Activated B cell treated with CpG ODN at 0.5 μM for 24 hours (primary cell): ENCODE measurements at regions of chr7 and their contacts with region 1.

Region 1: GRCh38 chr7:7424151-7424873 is 111.4 kb downstream of the COL28A1 start:
- DNase-seq: no peak
- ATAC-seq: peak; percentile 75
- H3K4me3 Mint-ChIP-seq: peak overlapping the region; percentile 86
- H3K27ac Mint-ChIP-seq: peak overlapping the region; percentile 37
- H3K4me1 Mint-ChIP-seq: peaks cover 6% of the 10 kb centered on the region
- H3K27me3 Mint-ChIP-seq: no peaks in the 10 kb centered on the region
- CTCF ChIP-seq: no peak

Region 2: GRCh38 chr7:7542251-7542835 is 118.0 kb after region 1 on chr7:
- CTCF ChIA-PET with region 1: interaction called, 5 read pairs
- POLR2A ChIA-PET with region 1: no interaction called
- intact Hi-C with region 1: loop called (anchors 2 kb)
- DNase-seq: no peak
- ATAC-seq: no peak
- H3K4me3 Mint-ChIP-seq: no peak overlapping the region
- H3K27ac Mint-ChIP-seq: no peak overlapping the region
- H3K4me1 Mint-ChIP-seq: peaks cover 2% of the 10 kb centered on the region
- H3K27me3 Mint-ChIP-seq: peaks cover 6% of the 10 kb centered on the region
- CTCF ChIP-seq: no peak

Region 3: GRCh38 chr7:8217200-8218068 is 793.1 kb after region 1 on chr7:
- CTCF ChIA-PET with region 1: interaction called, 3 read pairs
- POLR2A ChIA-PET with region 1: no interaction called
- intact Hi-C with region 1: loop called (anchors 1 kb)
- DNase-seq: no peak
- ATAC-seq: no peak
- H3K4me3 Mint-ChIP-seq: no peak overlapping the region
- H3K27ac Mint-ChIP-seq: no peak overlapping the region
- H3K4me1 Mint-ChIP-seq: no peaks in the 10 kb centered on the region
- H3K27me3 Mint-ChIP-seq: no peaks in the 10 kb centered on the region
- CTCF ChIP-seq: no peak